Thyroid gland (tissue), 4 donors: ENCODE measurements at regions of chr18 and their contacts with region 1.

Region 1: DNA sequence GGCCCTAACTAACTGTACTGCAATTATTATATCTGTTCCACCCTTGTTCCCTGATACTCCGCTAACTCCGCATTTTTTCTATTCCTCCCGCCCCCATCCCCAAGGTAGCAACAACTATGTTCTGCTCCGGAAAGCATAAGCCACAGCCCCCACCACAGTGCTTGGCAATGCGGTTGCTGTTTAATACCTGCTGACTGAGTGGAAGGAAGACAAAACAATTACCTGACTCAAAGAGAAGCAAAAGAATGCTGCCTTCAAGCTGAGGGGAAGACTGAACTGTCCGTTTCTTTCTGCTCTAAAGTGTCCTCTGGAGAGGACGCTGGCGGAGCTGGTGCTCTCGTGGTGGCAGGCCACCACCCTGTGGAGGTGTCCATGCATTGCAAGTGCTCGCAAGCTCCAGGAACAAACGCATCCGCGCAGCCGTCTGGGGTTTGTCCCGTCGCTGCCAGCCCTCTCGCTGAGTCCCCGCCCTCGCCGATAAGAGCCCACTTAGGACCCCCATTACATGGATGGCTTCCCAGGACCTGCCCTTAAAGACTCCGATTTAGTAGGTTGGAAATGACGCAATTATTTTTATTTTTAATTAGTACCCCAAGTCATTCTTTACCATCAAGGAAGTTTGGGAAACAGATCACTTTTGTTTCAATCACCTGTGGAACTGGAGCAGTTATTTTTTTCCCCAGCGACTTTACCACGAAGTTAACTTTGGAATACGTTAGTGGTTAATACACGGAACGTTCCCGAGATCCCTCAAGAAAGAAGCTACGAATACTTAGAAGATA is 1.6 kb upstream of the MYL12A start:
- DNase-seq: peak; percentile 88 to 90
- H3K4me3 ChIP-seq: peak overlapping the region in 2 of 3 donors; percentile 5 to 98
- H3K27ac ChIP-seq: peak overlapping the region; percentile 97 to 100 (median 99)
- H3K4me1 ChIP-seq: peaks cover 5 to 25% of the 10 kb centered on the region in 2 donors
- H3K27me3 ChIP-seq: no peaks in the 10 kb centered on the region
- CTCF ChIP-seq: peak; percentile 80 to 95 (median 94)
- POLR2A ChIP-seq: no peak

Region 2: DNA sequence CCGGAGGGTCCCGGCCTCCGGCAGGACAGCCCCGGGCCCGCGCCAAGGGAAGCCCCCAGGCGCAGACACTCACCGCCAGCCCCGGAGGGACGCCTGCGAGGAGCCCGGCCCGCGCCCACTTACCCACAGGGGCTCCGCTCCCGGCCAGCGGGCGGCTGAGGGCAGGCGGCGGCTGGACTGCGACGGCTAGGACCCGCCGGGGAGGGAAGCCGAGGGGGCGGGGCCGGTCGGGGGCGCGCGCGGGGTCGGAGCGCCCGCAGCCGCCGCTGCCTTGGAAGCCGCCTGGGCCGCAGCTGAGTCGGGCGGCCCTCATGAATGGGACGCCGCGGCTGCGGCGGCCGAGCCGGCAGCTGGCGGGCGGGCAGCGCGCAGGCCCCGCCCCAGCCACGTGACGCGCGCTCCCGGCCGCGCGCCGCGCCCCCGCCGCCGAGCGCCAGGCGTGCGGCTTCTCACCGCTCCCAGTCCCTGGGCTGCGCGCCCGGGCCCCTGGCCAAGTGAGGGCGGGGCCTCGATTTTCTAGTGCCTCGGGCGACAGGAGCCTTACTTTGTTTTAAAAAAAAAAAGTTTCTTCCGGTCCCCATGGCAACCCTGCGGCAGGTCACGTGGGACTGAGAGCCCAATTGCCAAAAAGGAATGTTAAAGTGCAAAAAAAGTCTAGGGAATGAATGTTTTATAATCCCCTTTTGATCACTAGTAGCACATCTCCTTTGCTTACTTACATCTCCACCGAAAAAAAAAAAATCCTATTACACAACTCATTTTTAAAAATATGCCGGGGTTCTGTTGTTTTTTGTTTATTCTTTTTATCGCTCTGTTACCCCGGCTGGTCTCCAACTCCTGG is 232.9 kb before region 1 on chr18 and contains the start of gene LPIN2:
- intact Hi-C with region 1: loop called (anchors 10 kb)
- DNase-seq: peak; percentile 99 to 100
- H3K4me3 ChIP-seq: peak within 1 kb of the TSS; percentile 75 to 84 (median 79)
- H3K27ac ChIP-seq: peak within 1 kb of the TSS; percentile 88 to 96 (median 95)
- H3K4me1 ChIP-seq: peaks cover 15 to 41% of the 10 kb centered on the region in 2 donors
- H3K27me3 ChIP-seq: no peaks in the 10 kb centered on the region
- CTCF ChIP-seq: no peak
- POLR2A ChIP-seq: peak in 1 of 2 donors; percentile 89
- total RNA-seq, gene LPIN2: 39.4 to 68.0 (median 47.4) TPM

Region 3: DNA sequence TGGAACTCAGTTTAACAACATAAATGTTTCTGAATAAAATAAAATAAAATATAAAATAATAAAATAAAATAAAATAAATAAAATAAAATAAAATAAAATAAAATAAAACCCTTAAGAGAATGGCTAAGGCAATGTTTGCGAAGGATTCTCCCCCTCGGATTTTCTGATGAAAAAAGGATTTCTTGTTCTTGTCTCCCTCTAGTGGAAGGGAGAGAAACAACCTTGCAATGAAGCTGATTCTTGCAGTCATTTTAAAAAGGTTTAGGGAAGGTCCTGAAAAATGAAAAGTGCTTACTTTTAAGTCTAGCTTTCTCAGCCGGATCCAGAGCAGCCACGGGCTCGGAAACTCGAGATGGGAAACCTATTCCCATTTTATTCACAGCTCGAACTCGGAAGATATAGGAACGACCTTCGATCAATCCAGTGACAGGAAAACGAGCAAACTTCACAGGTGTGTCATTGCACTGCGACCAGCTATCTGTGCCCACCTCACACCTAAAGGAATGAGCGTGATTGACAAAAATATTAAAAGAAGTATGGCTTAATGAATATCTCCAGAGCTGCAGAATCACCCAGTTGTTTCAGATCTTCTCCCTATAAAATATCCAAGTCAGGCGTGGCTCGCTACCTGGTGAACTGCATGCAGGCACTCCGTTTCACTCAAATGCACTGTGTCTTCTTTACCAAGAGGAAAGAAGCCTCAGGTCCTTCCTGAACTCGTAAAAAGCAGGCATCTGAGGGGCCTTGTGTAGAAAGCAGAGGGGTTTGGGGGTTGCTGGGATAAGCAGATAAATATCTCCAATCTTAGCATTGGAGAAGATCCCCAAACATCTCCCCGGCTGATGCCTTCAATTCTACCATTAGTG is 94.4 kb before region 1 on chr18:
- intact Hi-C with region 1: loop called (anchors 5 kb)
- DNase-seq: no peak
- H3K4me3 ChIP-seq: no peak overlapping the region
- H3K27ac ChIP-seq: no peak overlapping the region
- H3K4me1 ChIP-seq: peaks cover 6 to 11% of the 10 kb centered on the region in 2 donors
- H3K27me3 ChIP-seq: no peaks in the 10 kb centered on the region
- CTCF ChIP-seq: peak; percentile 36 to 88 (median 58)
- POLR2A ChIP-seq: no peak

Region 4: GRCh38 chr18:3380384-3380961 is 134.4 kb after region 1 on chr18:
- intact Hi-C with region 1: no loop called
- DNase-seq: no peak
- H3K4me3 ChIP-seq: no peak overlapping the region
- H3K27ac ChIP-seq: no peak overlapping the region
- H3K4me1 ChIP-seq: peaks cover 0 to 5% of the 10 kb centered on the region in 2 donors
- H3K27me3 ChIP-seq: no peaks in the 10 kb centered on the region
- CTCF ChIP-seq: no peak
- POLR2A ChIP-seq: no peak